ENCODE measurements at regions of chr3 and their contacts with region 1.

Region 1: GRCh38 chr3:150495563-150496168 is 50.6 kb downstream of the SERP1 start:
- DNase-seq: no peak
- ATAC-seq: peak; percentile 62

Region 2: GRCh38 chr3:149969940-149970715 is 525.5 kb before region 1 on chr3:
- intact Hi-C with region 1: loop called (anchors 10 kb)
- DNase-seq: peak; percentile 88
- ATAC-seq: peak; percentile 74

Region 3: GRCh38 chr3:150227839-150228238 is 267.8 kb before region 1 on chr3:
- intact Hi-C with region 1: loop called (anchors 5 kb)
- DNase-seq: no peak
- ATAC-seq: peak; percentile 67

Region 4: DNA sequence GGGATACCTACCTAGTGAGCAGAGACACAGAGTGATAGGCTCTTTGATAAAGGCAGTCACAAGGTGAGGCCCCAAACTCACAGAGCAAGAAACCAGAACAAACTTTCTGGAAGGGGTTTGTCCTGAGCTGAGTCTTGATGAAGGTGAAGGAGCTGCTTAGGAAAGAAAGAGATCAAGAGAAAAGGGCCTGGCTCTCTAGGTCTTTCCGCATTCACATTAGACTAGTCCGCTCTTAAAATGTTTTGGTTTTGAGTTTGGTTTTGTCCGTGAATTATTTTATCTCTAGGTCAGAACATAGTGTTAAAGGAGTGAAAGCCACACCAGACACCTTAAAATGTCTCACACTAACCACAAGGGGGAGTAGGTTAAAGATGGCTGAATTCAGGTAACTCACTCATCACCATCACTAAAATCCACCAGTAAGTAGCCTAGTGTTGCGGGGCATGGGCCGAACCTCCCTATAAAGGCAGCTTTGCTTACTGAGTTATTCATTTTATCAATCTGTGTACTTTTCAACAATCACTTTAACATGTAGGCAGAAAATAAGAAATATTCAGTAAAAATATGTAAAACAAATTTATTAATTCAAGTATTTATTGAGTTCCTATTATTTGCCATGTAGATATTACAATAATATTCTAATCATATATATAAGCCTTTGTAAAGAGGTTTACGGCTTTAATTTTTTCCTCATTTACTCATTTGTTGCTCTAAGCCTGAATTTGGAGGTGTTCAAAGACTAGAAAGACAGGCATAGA is 209.1 kb before region 1 on chr3:
- intact Hi-C with region 1: loop called (anchors 2 kb)
- DNase-seq: no peak
- ATAC-seq: peak; percentile 85

Region 5: GRCh38 chr3:150409512-150410310 is 86.0 kb before region 1 on chr3:
- intact Hi-C with region 1: loop called (anchors 5 kb)
- DNase-seq: peak; percentile 85
- ATAC-seq: peak; percentile 65

Region 6: DNA sequence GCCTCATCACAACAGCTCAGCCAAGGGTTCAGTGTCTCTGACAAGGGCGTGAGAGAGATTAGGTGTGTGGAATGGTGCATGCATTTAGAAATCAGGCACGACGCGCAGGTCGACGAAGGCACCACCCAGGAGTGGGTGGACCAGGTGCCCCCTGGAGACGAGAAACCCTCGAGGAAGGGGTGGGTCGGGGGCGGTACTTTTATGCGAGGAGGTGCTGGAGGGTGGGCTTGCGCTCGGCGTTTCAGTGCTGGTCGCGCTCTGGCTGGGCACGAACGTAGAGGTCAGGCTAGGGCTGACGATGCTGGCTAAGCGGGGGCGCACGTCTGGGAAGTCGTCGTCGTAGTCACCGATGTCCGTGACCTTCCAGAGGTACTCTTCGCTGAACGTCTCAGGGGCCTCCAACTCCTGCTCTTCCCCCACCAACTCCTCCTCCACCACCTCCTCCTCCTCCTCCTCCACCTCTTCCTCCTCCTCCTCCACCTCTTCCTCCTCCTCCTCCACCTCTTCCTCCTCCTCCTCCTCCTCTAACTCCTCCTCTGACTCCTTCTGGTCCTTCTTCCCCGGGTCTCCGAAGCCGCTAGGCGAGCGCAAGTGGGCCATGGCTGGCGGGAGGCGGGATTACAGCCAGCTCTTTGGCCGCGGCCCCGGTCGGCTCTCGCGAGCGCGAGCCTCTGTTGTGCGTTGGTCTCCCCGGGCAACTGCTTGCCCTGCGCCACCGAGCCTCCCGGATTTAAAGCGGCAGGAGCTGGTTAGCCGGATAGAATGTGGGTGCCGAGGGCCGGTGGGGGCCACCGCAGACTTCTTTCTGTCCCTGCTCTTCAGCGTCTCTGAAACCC is 207.9 kb after region 1 on chr3 and contains the start of gene ERICH6:
- intact Hi-C with region 1: no loop called
- DNase-seq: peak; percentile 96
- ATAC-seq: peak; percentile 99
- total RNA-seq, gene ERICH6: not detected

Measured in Right ventricle myocardium superior (tissue), 1 donor.